ENCODE measurements at regions of chr2 and their contacts with region 1.

Region 1: DNA sequence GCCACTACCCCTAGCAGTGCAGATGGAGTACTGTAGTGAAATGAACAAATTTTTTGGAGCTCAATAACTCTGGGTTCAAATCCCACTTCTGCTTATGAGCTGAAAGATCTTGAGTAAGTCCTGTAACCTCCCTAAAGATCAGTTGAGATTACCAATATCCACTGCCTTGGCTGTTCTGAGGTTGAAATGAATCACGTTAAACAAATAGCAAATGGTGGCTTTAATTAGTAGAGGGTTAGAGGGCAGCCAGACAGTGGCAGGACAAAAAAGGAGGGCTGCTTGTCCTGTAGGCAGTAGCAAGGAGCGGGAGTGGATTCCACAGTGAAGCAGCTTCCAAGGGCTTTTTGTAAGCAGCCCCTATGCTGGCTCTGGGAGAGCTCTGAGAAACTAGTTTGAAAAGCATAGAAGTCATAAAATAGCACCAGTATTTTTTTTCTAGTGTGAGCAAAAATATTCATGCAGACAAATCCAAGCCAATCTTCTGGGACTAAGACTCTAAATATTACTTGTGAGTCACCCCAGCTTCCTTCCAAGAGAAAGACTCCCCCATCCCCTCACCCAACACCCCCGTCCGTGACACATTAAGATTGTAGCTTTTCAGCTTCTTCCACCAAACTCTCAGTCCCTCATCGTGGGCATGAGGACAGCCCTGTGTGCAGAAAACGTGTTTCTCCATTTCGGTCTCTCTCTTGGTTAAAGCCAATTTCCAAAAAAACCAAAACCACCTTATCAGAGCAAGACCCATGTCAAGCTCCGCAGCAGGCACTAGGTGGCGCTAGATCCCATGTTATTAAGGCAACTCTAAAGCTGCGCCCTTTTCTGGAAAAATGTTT is 123.5 kb upstream of the LGALSL start:
- DNase-seq: peak; percentile 52 to 88 (median 82)
- ATAC-seq: peak; percentile 15
- H3K4me3 ChIP-seq: no peak overlapping the region
- H3K4me3 Mint-ChIP-seq: peak overlapping the region; percentile 58
- H3K27ac ChIP-seq: no peak overlapping the region
- H3K27ac Mint-ChIP-seq: peak overlapping the region; percentile 52
- H3K4me1 ChIP-seq: peaks cover 28% of the 10 kb centered on the region
- H3K4me1 Mint-ChIP-seq: peaks cover 33% of the 10 kb centered on the region
- H3K27me3 ChIP-seq: no peaks in the 10 kb centered on the region
- H3K27me3 Mint-ChIP-seq: no peaks in the 10 kb centered on the region
- CTCF ChIP-seq: peak; percentile 91

Region 2: GRCh38 chr2:64052468-64053241 is 277.8 kb before region 1 on chr2:
- CTCF ChIA-PET with region 1: interaction called, 279 read pairs
- POLR2A ChIA-PET with region 1: interaction called, 45 read pairs
- intact Hi-C with region 1: loop called (anchors 1 kb)
- DNase-seq: peak in 5 of 9 experiments; percentile 11 to 43 (median 24)
- ATAC-seq: peak; percentile 53
- H3K4me3 ChIP-seq: no peak overlapping the region
- H3K4me3 Mint-ChIP-seq: no peak overlapping the region
- H3K27ac ChIP-seq: no peak overlapping the region
- H3K27ac Mint-ChIP-seq: peak overlapping the region; percentile 34
- H3K4me1 ChIP-seq: peaks cover 20% of the 10 kb centered on the region
- H3K4me1 Mint-ChIP-seq: peaks cover 42% of the 10 kb centered on the region
- H3K27me3 ChIP-seq: no peaks in the 10 kb centered on the region
- H3K27me3 Mint-ChIP-seq: no peaks in the 10 kb centered on the region
- CTCF ChIP-seq: no peak

Region 3: GRCh38 chr2:64203858-64204632 is 126.5 kb before region 1 on chr2:
- CTCF ChIA-PET with region 1: interaction called, 5 read pairs
- POLR2A ChIA-PET with region 1: no interaction called
- intact Hi-C with region 1: loop called in 1 of 2 experiments (anchors 5 kb)
- DNase-seq: peak in 4 of 9 experiments; percentile 6 to 89 (median 48)
- ATAC-seq: peak; percentile 42
- H3K4me3 ChIP-seq: peak overlapping the region; percentile 25 to 42
- H3K4me3 Mint-ChIP-seq: peak overlapping the region; percentile 71
- H3K27ac ChIP-seq: peak overlapping the region; percentile 13 to 40
- H3K27ac Mint-ChIP-seq: peak overlapping the region; percentile 87
- H3K4me1 ChIP-seq: peaks cover 29% of the 10 kb centered on the region
- H3K4me1 Mint-ChIP-seq: peaks cover 64% of the 10 kb centered on the region
- H3K27me3 ChIP-seq: no peaks in the 10 kb centered on the region
- H3K27me3 Mint-ChIP-seq: no peaks in the 10 kb centered on the region
- CTCF ChIP-seq: no peak

Region 4: DNA sequence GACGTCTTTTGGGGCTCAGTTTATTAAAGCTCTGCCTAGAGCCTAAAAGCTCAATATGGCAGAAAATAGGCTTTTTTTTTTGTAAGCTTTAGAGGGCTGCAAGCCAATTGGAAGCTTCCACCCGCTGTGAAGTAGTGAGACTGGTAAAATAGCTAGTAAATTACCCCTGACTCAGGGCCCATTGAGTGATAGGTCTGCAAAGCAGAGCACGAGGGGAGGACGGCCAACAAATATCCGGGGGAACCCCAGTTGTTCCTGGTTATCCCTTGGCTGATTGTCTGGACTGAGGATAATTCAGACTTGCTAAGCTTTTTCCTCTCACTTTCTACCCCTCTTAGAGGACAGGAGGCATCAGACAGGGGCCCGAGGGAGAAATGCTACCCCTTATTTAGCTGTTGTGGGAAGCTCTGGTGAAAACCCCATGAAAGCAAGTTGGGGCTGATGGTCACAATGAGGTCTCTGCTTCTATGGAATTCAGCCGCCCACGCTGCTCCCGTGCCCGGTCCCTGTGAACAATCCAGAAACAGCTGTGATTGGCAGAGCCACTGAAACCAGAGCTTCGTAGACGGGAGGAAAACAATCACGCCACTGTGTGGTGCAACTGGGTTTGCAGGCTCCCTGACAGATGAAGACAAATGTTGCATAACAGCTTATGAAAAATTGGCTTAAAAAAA is 18.4 kb before region 1 on chr2:
- CTCF ChIA-PET with region 1: interaction called, 18 read pairs
- POLR2A ChIA-PET with region 1: interaction called, 7 read pairs
- intact Hi-C with region 1: no loop called
- DNase-seq: no peak
- ATAC-seq: no peak
- H3K4me3 ChIP-seq: no peak overlapping the region
- H3K4me3 Mint-ChIP-seq: no peak overlapping the region
- H3K27ac ChIP-seq: no peak overlapping the region
- H3K27ac Mint-ChIP-seq: no peak overlapping the region
- H3K4me1 ChIP-seq: no peaks in the 10 kb centered on the region
- H3K4me1 Mint-ChIP-seq: no peaks in the 10 kb centered on the region
- H3K27me3 ChIP-seq: no peaks in the 10 kb centered on the region
- H3K27me3 Mint-ChIP-seq: no peaks in the 10 kb centered on the region
- CTCF ChIP-seq: no peak

Region 5: DNA sequence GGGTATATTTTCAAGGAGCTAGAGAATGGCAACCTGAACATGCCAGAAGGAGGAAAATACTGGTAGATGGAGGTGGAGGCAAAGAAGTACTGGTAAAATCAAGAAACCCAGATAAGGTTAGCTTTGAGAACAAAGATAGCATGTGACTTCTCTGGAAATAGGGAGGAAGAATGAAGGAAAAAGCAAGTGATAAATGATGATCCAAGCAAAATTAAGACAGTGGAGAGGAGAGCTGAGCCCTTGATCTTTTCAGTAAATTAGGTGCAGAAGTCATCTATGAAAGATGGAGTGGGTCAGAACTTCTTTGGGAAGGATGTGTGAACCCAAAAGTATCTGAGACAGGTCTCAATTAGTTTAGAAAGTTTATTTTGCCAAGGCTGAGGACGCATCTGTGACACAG is 167.9 kb after region 1 on chr2:
- CTCF ChIA-PET with region 1: interaction called, 16 read pairs
- POLR2A ChIA-PET with region 1: no interaction called
- intact Hi-C with region 1: no loop called
- DNase-seq: no peak
- ATAC-seq: no peak
- H3K4me3 ChIP-seq: no peak overlapping the region
- H3K4me3 Mint-ChIP-seq: no peak overlapping the region
- H3K27ac ChIP-seq: no peak overlapping the region
- H3K27ac Mint-ChIP-seq: no peak overlapping the region
- H3K4me1 ChIP-seq: no peaks in the 10 kb centered on the region
- H3K4me1 Mint-ChIP-seq: no peaks in the 10 kb centered on the region
- H3K27me3 ChIP-seq: no peaks in the 10 kb centered on the region
- H3K27me3 Mint-ChIP-seq: peaks cover 9% of the 10 kb centered on the region
- CTCF ChIP-seq: no peak

Region 6: GRCh38 chr2:64586883-64587481 is 256.5 kb after region 1 on chr2:
- CTCF ChIA-PET with region 1: interaction called, 10 read pairs
- POLR2A ChIA-PET with region 1: no interaction called
- intact Hi-C with region 1: no loop called
- DNase-seq: peak in 2 of 9 experiments; percentile 57 to 70
- ATAC-seq: peak; percentile 75
- H3K4me3 ChIP-seq: no peak overlapping the region
- H3K4me3 Mint-ChIP-seq: no peak overlapping the region
- H3K27ac ChIP-seq: no peak overlapping the region
- H3K27ac Mint-ChIP-seq: no peak overlapping the region
- H3K4me1 ChIP-seq: no peaks in the 10 kb centered on the region
- H3K4me1 Mint-ChIP-seq: no peaks in the 10 kb centered on the region
- H3K27me3 ChIP-seq: no peaks in the 10 kb centered on the region
- H3K27me3 Mint-ChIP-seq: no peaks in the 10 kb centered on the region
- CTCF ChIP-seq: peak; percentile 87

Region 7: DNA sequence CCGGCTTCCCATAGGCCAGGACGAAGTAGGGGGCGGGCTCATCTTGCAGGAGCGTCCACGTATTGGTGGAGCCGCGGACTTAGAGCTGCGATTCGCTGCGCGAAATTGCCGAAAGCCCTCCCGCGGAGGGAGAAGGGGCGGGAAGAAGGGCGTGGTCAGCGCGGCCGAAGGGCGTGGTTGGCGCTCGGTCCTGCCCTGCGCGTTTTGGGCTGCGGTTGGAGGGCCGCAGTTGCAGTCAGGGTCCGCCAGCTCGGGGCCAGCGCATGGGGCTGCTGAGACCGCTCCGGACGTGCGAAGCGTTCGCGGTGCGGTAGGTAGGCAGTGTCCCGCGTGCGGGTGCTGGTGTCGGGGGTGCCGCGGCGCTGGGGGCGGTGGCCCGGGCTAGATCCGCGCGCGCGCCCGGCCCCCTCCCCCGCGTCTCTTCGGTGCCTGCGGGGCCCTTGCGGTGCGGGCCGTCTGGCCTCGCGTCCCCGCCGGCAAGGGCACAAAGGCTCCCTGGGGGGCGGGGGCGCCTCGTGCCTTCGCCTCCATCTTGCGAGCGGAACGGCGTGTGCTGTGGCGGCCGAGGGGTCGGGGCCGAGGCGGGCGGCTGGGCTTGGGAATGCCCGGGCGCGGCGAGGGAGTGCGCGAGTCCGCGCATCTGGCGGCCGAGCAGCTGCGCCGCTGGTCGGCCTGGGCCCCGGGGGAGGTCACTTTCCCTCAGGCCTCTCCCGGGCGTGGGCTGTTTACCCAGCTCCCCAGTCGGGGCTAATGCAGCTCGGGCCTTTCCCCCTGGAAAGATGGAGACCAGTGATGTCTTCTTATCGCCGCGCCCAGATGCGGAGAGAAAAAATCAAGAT is 725.9 kb after region 1 on chr2 and contains the start of gene CEP68:
- CTCF ChIA-PET with region 1: no interaction called
- POLR2A ChIA-PET with region 1: no interaction called
- intact Hi-C with region 1: loop called in 1 of 2 experiments (anchors 10 kb)
- DNase-seq: peak; percentile 89 to 98 (median 96)
- ATAC-seq: peak; percentile 89
- H3K4me3 ChIP-seq: peak within 1 kb of the TSS; percentile 85 to 86
- H3K4me3 Mint-ChIP-seq: peak within 1 kb of the TSS; percentile 99
- H3K27ac ChIP-seq: peak within 1 kb of the TSS; percentile 62 to 72
- H3K27ac Mint-ChIP-seq: peak within 1 kb of the TSS; percentile 97
- H3K4me1 ChIP-seq: peaks cover 70% of the 10 kb centered on the region
- H3K4me1 Mint-ChIP-seq: peaks cover 73% of the 10 kb centered on the region
- H3K27me3 ChIP-seq: no peaks in the 10 kb centered on the region
- H3K27me3 Mint-ChIP-seq: no peaks in the 10 kb centered on the region
- CTCF ChIP-seq: no peak
- total RNA-seq, gene CEP68: 19.9 to 20.5 TPM